CD4-positive, alpha-beta memory T cell (primary cell): ENCODE measurements at regions of chr5 and their contacts with region 1.

Region 1: DNA sequence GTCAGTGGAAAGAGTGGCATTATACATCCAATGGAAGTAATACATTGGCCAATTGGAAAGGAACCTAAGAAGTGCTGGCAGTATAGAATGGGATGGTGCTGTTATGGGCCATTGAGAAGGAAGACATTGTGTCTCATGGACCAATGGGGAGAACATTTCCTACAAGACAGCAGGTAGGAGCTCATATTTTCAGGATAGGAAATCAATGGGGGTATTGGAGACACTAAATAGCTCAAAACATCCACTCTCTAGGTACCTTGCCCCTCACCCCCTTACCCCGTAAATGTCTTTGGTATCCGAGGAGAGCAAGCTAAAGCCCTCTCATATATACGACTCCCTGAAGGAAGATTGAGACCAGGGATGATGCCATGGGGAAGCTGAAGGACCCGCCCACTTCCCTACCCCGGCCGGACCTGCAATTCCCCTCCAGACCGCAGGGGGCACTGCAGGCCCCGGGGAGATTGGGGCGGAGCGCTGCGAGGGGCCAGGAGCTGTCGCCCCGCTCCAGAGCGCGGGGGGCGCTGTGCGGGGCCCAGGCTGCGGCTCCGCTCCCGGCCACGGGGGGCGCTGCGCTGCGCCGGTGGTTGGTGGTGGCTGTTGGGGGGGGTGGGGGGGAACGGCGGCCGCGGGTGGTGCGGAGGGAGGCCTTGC is at the start of gene KDM3B:
- DNase-seq: peak; percentile 85 to 98 (median 95)
- H3K4me3 ChIP-seq: peak within 1 kb of the TSS; percentile 82 to 96
- H3K4me3 Mint-ChIP-seq: peak within 1 kb of the TSS; percentile 93 to 98 (median 96)
- H3K27ac ChIP-seq: peak within 1 kb of the TSS; percentile 89
- H3K27ac Mint-ChIP-seq: peak within 1 kb of the TSS; percentile 95 to 99 (median 97)
- H3K4me1 ChIP-seq: peaks cover 38% of the 10 kb centered on the region
- H3K4me1 Mint-ChIP-seq: peaks cover 31 to 54% (median 43%) of the 10 kb centered on the region in 4 donors
- H3K27me3 ChIP-seq: no peaks in the 10 kb centered on the region
- H3K27me3 Mint-ChIP-seq: peaks cover 0 to 1% of the 10 kb centered on the region in 2 donors
- total RNA-seq, gene KDM3B: 84.7 to 85.6 TPM

Region 2: GRCh38 chr5:138054847-138055558 is 297.2 kb before region 1 on chr5:
- CTCF ChIA-PET with region 1: no interaction called
- POLR2A ChIA-PET with region 1: no interaction called
- intact Hi-C with region 1: no loop called
- DNase-seq: no peak
- H3K4me3 ChIP-seq: no peak overlapping the region
- H3K4me3 Mint-ChIP-seq: no peak overlapping the region
- H3K27ac ChIP-seq: no peak overlapping the region
- H3K27ac Mint-ChIP-seq: no peak overlapping the region
- H3K4me1 ChIP-seq: no peaks in the 10 kb centered on the region
- H3K4me1 Mint-ChIP-seq: peaks cover 2 to 11% (median 7%) of the 10 kb centered on the region in 4 donors
- H3K27me3 ChIP-seq: no peaks in the 10 kb centered on the region
- H3K27me3 Mint-ChIP-seq: peaks cover 0 to 1% of the 10 kb centered on the region in 2 donors

Region 3: DNA sequence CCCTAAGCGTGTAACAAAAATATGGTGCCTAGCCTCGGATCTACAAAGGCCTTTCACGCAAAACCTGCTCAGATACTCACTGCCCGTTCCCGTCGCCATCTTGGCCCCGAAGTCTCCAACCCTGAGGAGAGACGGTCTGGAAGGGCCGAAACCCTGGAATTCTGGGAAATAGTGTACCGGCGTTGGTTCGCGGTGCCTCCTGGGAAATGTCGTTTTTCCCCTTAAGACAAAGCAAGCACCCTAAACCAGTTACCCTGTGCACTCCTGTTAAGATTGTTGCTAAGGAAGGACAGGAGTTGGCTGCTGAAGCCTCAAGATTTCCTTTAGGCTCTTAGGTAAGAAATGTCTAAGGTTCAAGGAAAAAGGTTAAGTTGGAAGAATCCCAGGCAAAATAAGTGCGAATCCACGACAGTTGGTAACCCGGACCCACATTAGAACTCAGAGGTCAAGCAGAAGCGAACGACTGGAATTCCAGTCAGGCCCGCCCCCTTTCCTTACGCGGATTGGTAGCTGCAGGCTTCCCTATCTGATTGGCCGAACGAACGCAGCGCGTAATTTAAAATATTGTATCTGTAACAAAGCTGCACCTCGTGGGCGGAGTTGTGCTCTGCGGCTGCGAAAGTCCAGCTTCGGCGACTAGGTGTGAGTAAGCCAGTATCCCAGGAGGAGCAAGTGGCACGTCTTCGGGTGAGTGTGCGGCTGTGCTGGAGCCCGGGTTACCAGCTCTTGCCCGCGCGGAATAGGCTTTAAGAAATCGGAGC is 173.5 kb before region 1 on chr5 and contains the starts of genes BRD8 and KIF20A:
- CTCF ChIA-PET with region 1: interaction called, 10 read pairs
- POLR2A ChIA-PET with region 1: interaction called, 4 read pairs
- intact Hi-C with region 1: loop called (anchors 1 kb)
- DNase-seq: peak; percentile 85 to 92 (median 88)
- H3K4me3 ChIP-seq: peak within 1 kb of the TSS; percentile 80 to 93
- H3K4me3 Mint-ChIP-seq: peak within 1 kb of the TSS in 1 of 8 donors; percentile 9
- H3K27ac ChIP-seq: peak within 1 kb of the TSS; percentile 72
- H3K27ac Mint-ChIP-seq: peak within 1 kb of the TSS in 2 of 7 donors; percentile 16 to 55
- H3K4me1 ChIP-seq: peaks cover 17% of the 10 kb centered on the region
- H3K4me1 Mint-ChIP-seq: peaks cover 4 to 17% (median 11%) of the 10 kb centered on the region in 4 donors
- H3K27me3 ChIP-seq: no peaks in the 10 kb centered on the region
- H3K27me3 Mint-ChIP-seq: no peaks in the 10 kb centered on the region
- total RNA-seq, gene BRD8: 93.7 to 97.3 TPM
- total RNA-seq, gene KIF20A: not detected

Region 4: GRCh38 chr5:138337685-138338410 is 14.3 kb before region 1 on chr5 and contains the start of gene FAM53C:
- CTCF ChIA-PET with region 1: interaction called, 314 read pairs
- POLR2A ChIA-PET with region 1: interaction called, 261 read pairs
- intact Hi-C with region 1: loop called (anchors 1 kb)
- DNase-seq: peak; percentile 88 to 96 (median 93)
- H3K4me3 ChIP-seq: peak within 1 kb of the TSS; percentile 74 to 85
- H3K4me3 Mint-ChIP-seq: peak within 1 kb of the TSS; percentile 90 to 95 (median 92)
- H3K27ac ChIP-seq: peak within 1 kb of the TSS; percentile 92
- H3K27ac Mint-ChIP-seq: peak within 1 kb of the TSS; percentile 98 to 100 (median 99)
- H3K4me1 ChIP-seq: peaks cover 29% of the 10 kb centered on the region
- H3K4me1 Mint-ChIP-seq: peaks cover 20 to 48% (median 34%) of the 10 kb centered on the region in 4 donors
- H3K27me3 ChIP-seq: no peaks in the 10 kb centered on the region
- H3K27me3 Mint-ChIP-seq: no peaks in the 10 kb centered on the region
- total RNA-seq, gene FAM53C: 19.3 to 20.4 TPM

Region 5: DNA sequence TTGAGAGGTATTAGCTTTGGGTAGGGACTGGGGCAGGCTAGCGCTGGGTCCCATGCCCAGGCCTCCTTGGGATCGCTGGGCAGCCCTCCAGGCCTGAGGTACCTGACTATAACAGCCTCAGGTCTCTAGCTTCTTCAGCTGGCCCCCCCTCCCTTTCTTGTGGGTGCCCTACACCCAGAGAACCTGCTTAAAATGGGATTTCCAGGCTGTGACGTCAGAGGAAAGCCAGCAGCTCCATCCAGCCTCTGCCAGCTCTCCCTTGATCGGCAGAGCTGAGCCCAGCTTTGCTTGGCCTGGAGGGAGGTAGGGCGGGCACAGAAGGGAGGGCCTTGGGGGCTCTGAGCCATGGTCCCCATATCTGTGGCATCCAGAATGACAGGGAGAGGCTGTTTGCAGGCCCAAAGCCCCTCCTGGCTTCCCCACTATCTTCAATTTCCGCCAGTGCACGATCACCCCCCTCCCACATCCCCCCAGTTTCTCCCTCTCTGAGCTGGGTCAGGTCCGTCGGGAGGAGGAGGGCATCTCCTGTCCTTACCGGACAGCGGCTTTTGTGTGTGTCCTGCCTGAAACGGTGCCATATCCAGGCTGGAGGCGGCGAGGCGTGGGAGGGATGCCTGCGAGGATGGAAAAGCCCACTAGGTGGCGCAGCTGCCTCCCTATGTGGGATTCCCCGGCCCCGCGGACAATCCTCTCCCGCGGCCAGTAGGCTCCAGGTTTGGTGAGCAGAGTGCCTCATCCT is 97.5 kb after region 1 on chr5:
- CTCF ChIA-PET with region 1: interaction called, 11 read pairs
- POLR2A ChIA-PET with region 1: no interaction called
- intact Hi-C with region 1: no loop called
- DNase-seq: peak; percentile 59 to 71 (median 63)
- H3K4me3 ChIP-seq: no peak overlapping the region
- H3K4me3 Mint-ChIP-seq: peak overlapping the region in 4 of 8 donors; percentile 9 to 69 (median 44)
- H3K27ac ChIP-seq: no peak overlapping the region
- H3K27ac Mint-ChIP-seq: peak overlapping the region in 5 of 7 donors; percentile 42 to 81 (median 73)
- H3K4me1 ChIP-seq: peaks cover 8% of the 10 kb centered on the region
- H3K4me1 Mint-ChIP-seq: peaks cover 7 to 13% (median 10%) of the 10 kb centered on the region in 4 donors
- H3K27me3 ChIP-seq: no peaks in the 10 kb centered on the region
- H3K27me3 Mint-ChIP-seq: peaks cover 2 to 4% of the 10 kb centered on the region in 2 donors

Region 6: GRCh38 chr5:138542956-138543729 is 190.9 kb after region 1 on chr5 and contains the start of gene ETF1:
- CTCF ChIA-PET with region 1: interaction called, 5 read pairs
- POLR2A ChIA-PET with region 1: interaction called, 7 read pairs
- intact Hi-C with region 1: loop called (anchors 1 kb)
- DNase-seq: peak; percentile 99 to 100 (median 100)
- H3K4me3 ChIP-seq: peak within 1 kb of the TSS; percentile 80 to 92
- H3K4me3 Mint-ChIP-seq: peak within 1 kb of the TSS; percentile 95 to 100 (median 100)
- H3K27ac ChIP-seq: peak within 1 kb of the TSS; percentile 100
- H3K27ac Mint-ChIP-seq: peak within 1 kb of the TSS; percentile 99 to 100 (median 100)
- H3K4me1 ChIP-seq: peaks cover 73% of the 10 kb centered on the region
- H3K4me1 Mint-ChIP-seq: peaks cover 48 to 87% (median 71%) of the 10 kb centered on the region in 4 donors
- H3K27me3 ChIP-seq: no peaks in the 10 kb centered on the region
- H3K27me3 Mint-ChIP-seq: no peaks in the 10 kb centered on the region
- total RNA-seq, gene ETF1: 42.6 to 46.5 TPM